Posterior cingulate gyrus (tissue), 11 donors: ENCODE measurements at regions of chr2 and their contacts with region 1.

Region 1: GRCh38 chr2:112048887-112049286 is 6.2 kb upstream of the TMEM87B start:
- DNase-seq: no peak

Region 2: GRCh38 chr2:111887819-111888223 is 161.1 kb before region 1 on chr2:
- intact Hi-C with region 1: loop called (anchors 1 kb)
- DNase-seq: peak; percentile 32 to 95 (median 78)